OCI-LY7 (cell line): ENCODE measurements at regions of chr1 and their contacts with region 1.

Region 1: GRCh38 chr1:198620951-198621824 is 17.7 kb upstream of the PTPRC start:
- DNase-seq: peak; percentile 97
- H3K4me3 ChIP-seq: peak overlapping the region; percentile 65
- H3K27ac ChIP-seq: peak overlapping the region; percentile 98
- H3K4me1 ChIP-seq: peaks cover 81% of the 10 kb centered on the region
- CTCF ChIP-seq: no peak; the same call in 1 of the 2 replicates

Region 2: DNA sequence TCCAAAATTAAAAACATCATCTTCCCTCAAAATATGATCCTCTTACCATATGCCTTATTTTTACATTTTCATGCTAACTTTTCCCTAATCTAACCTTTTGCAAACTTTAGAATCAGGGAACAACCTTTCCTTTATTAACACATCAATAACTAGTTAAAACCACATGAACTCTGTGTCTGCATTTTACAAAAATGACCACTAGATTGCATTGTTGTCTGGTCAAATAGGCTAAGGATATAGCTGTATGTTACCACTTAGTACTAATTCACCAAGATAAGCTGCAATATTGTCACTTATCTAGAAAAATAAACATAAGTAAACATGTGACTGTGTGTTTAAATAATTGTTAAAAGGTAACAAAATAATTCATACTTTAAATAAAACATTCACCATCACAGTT is 928.2 kb before region 1 on chr1:
- CTCF ChIA-PET with region 1: no interaction called
- POLR2A ChIA-PET with region 1: no interaction called
- intact Hi-C with region 1: no loop called
- DNase-seq: peak; percentile 19
- H3K4me3 ChIP-seq: no peak overlapping the region
- H3K27ac ChIP-seq: no peak overlapping the region
- H3K4me1 ChIP-seq: peaks cover 8% of the 10 kb centered on the region
- CTCF ChIP-seq: peak; percentile 73

Region 3: DNA sequence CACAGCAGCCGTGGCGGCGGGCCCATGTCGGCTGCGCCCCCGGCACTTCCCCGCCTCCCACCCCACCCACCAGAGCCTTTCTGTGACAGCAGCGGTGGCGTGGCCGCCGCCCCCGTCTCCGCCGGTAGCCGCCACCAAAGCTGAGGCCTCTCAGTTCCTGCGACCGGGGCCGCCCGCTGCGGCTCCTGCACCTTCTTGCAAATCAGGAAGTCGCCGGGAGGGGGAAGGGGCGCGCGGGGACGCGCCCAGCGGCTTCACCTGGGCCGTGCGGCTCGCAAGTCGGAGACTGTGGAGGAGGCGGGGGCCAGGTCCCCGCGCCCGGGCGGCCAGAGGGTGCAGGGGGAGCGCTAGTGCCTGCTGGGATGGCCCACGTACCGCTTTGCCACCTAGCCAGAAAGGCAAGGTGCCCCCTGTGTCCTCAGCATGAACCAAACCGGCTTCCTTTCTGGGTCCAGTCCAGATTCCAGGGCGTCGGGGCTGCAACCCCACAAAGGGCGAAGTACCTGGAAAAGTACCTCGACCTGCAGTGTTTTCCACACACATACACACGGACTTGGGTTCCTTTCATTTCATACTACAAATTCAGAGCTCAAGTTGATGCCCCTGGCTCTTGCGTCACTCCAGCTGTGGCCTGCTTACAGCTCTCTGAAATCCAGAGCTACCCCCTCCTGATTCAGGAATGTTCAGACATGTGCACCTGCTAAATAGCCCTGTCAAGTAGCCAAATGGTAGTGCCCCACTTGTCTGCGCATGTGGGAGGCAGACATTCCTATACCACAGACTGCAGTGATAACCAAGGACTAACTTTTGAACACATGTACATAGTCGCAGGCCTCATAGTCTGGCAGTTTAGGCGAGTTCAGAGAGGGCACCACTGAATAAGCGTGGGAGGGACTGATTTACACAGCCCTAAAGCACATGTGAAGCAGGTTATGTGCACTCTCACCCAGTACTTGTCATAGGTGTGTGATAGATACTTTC is 845.6 kb before region 1 on chr1 and contains the start of gene DENND1B:
- CTCF ChIA-PET with region 1: no interaction called
- POLR2A ChIA-PET with region 1: no interaction called
- intact Hi-C with region 1: loop called (anchors 10 kb)
- DNase-seq: peak; percentile 92
- H3K4me3 ChIP-seq: peak within 1 kb of the TSS; percentile 85
- H3K27ac ChIP-seq: peak within 1 kb of the TSS; percentile 85
- H3K4me1 ChIP-seq: peaks cover 58% of the 10 kb centered on the region
- CTCF ChIP-seq: no peak
- total RNA-seq, gene DENND1B: 11.4 and 17.4 TPM in 2 replicates

Region 4: GRCh38 chr1:198543670-198544260 is 77.4 kb before region 1 on chr1:
- CTCF ChIA-PET with region 1: no interaction called
- POLR2A ChIA-PET with region 1: interaction called, 24 read pairs
- intact Hi-C with region 1: no loop called
- DNase-seq: peak; percentile 58
- H3K4me3 ChIP-seq: peak overlapping the region; percentile 41
- H3K27ac ChIP-seq: peak overlapping the region; percentile 71
- H3K4me1 ChIP-seq: peaks cover 54% of the 10 kb centered on the region
- CTCF ChIP-seq: no peak

Region 5: GRCh38 chr1:198638894-198639635 is 17.9 kb after region 1 on chr1 and contains the start of gene PTPRC:
- CTCF ChIA-PET with region 1: interaction called, 9 read pairs
- POLR2A ChIA-PET with region 1: interaction called, 405 read pairs
- intact Hi-C with region 1: loop called (anchors 1 kb)
- DNase-seq: peak; percentile 88
- H3K4me3 ChIP-seq: peak within 1 kb of the TSS; percentile 87
- H3K27ac ChIP-seq: peak within 1 kb of the TSS; percentile 96
- H3K4me1 ChIP-seq: peaks cover 63% of the 10 kb centered on the region
- CTCF ChIP-seq: no peak
- total RNA-seq, gene PTPRC: 161 and 177 TPM in 2 replicates

Region 6: DNA sequence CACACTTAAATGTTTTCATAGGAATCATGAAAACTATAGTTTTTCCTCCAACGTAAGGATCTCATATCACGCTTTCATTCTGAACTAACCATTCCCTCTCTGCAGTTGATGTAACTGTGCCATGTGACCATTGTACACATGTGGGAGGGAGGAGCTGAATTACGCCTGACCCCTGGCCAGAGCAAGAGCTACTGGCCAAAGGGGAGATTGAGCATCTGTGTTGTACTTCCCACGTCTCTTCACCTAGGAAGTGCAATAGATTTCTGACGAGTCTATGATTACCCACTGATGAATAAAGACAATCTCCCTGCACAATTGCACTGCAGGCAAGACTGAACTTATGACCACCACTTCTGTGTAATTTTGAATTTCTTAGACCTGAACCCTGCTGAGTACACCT is 41.6 kb after region 1 on chr1:
- CTCF ChIA-PET with region 1: no interaction called
- POLR2A ChIA-PET with region 1: interaction called, 410 read pairs
- intact Hi-C with region 1: no loop called
- DNase-seq: no peak
- H3K4me3 ChIP-seq: no peak overlapping the region
- H3K27ac ChIP-seq: peak overlapping the region; percentile 46
- H3K4me1 ChIP-seq: peaks cover 74% of the 10 kb centered on the region
- CTCF ChIP-seq: no peak

Region 7: GRCh38 chr1:199089393-199090122 is 468.4 kb after region 1 on chr1:
- CTCF ChIA-PET with region 1: no interaction called
- POLR2A ChIA-PET with region 1: no interaction called
- intact Hi-C with region 1: loop called (anchors 5 kb)
- DNase-seq: peak; percentile 76
- H3K4me3 ChIP-seq: peak overlapping the region; percentile 24
- H3K27ac ChIP-seq: peak overlapping the region; percentile 71
- H3K4me1 ChIP-seq: peaks cover 33% of the 10 kb centered on the region
- CTCF ChIP-seq: no peak